T-cell (primary cell): ENCODE measurements at regions of chr15 and their contacts with region 1.

Region 1: GRCh38 chr15:67142092-67142766 is 76.8 kb downstream of the SMAD3 start:
- DNase-seq: no peak
- ATAC-seq: no peak
- H3K4me3 ChIP-seq: no peak overlapping the region
- H3K4me3 Mint-ChIP-seq: no peak overlapping the region
- H3K27ac ChIP-seq: no peak overlapping the region
- H3K27ac Mint-ChIP-seq: peak overlapping the region in 1 of 2 donors; percentile 22
- H3K4me1 ChIP-seq: peaks cover 28 to 77% of the 10 kb centered on the region in 2 experiments
- H3K4me1 Mint-ChIP-seq: peaks cover 80 to 97% (median 90%) of the 10 kb centered on the region in 3 donors
- H3K27me3 ChIP-seq: no peaks in the 10 kb centered on the region
- H3K27me3 Mint-ChIP-seq: no peaks in the 10 kb centered on the region

Region 2: GRCh38 chr15:67225336-67225735 is 83.1 kb after region 1 on chr15:
- CTCF ChIA-PET with region 1: no interaction called
- POLR2A ChIA-PET with region 1: interaction called in 1 of 2 experiments, 18 read pairs
- DNase-seq: no peak
- ATAC-seq: no peak
- H3K4me3 ChIP-seq: no peak overlapping the region
- H3K4me3 Mint-ChIP-seq: no peak overlapping the region
- H3K27ac ChIP-seq: no peak overlapping the region
- H3K27ac Mint-ChIP-seq: no peak overlapping the region
- H3K4me1 ChIP-seq: no peaks in the 10 kb centered on the region
- H3K4me1 Mint-ChIP-seq: peaks cover 7 to 15% (median 12%) of the 10 kb centered on the region in 3 donors
- H3K27me3 ChIP-seq: no peaks in the 10 kb centered on the region
- H3K27me3 Mint-ChIP-seq: no peaks in the 10 kb centered on the region

Region 3: GRCh38 chr15:67510597-67511225 is 368.5 kb after region 1 on chr15:
- CTCF ChIA-PET with region 1: no interaction called
- POLR2A ChIA-PET with region 1: no interaction called
- DNase-seq: no peak
- ATAC-seq: no peak
- H3K4me3 ChIP-seq: no peak overlapping the region
- H3K4me3 Mint-ChIP-seq: no peak overlapping the region
- H3K27ac ChIP-seq: no peak overlapping the region
- H3K27ac Mint-ChIP-seq: no peak overlapping the region
- H3K4me1 ChIP-seq: no peaks in the 10 kb centered on the region
- H3K4me1 Mint-ChIP-seq: no peaks in the 10 kb centered on the region
- H3K27me3 ChIP-seq: no peaks in the 10 kb centered on the region
- H3K27me3 Mint-ChIP-seq: no peaks in the 10 kb centered on the region